CD4-positive, alpha-beta memory T cell (primary cell): ENCODE measurements at regions of chr7 and their contacts with region 1.

Region 1: DNA sequence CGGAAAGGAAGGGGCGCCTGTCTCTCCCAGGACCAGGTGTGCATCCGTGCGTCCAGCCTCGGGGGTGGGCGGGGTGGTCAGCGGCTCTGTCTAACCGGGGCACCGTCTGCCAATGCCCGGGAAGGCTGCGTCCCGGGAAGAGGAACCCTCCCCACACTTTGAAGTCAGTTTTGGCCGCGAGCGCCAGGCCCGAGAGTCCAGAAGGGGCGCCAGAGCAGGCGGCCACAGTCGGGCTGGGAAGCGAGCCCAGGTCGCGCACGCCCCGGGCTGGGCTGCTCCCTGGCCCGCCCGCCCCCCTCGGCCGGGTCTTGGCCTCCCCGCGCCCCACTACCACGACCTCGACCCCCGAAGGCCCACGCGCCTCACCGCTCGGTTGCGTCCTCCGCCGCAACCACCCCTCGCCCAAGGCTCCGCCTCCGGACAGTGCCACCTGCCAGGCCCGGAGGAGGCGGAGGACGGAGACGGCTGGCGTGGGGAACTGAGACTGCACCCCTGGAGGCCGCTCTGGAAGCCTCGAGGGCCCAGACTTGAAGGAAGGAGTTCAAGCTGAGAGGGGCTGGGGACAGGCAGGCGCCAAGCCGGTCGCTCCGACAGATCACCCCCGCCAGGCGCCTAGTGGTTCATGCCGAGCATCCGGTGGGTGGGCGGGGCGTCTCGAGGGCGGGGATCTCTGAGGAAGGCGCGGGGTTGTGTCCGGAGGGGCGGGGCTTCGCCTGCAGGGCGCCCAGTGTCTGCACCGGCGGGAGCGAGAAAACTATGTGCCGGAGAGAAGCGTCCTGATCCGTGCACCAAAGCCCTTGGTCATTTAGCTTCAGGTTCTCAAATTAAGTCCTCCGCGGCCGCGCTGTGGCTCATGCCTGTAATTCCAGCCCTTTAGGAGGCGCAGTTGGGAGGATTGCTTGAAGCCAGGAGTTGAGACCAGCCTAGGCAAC is at the start of gene BRAT1:
- DNase-seq: peak; percentile 91 to 95 (median 92)
- H3K4me3 ChIP-seq: peak within 1 kb of the TSS; percentile 52 to 82
- H3K4me3 Mint-ChIP-seq: peak within 1 kb of the TSS; percentile 84 to 91 (median 86)
- H3K27ac ChIP-seq: peak within 1 kb of the TSS; percentile 97
- H3K27ac Mint-ChIP-seq: peak within 1 kb of the TSS; percentile 81 to 92 (median 85)
- H3K4me1 ChIP-seq: peaks cover 49% of the 10 kb centered on the region
- H3K4me1 Mint-ChIP-seq: peaks cover 18 to 51% (median 31%) of the 10 kb centered on the region in 4 donors
- H3K27me3 ChIP-seq: no peaks in the 10 kb centered on the region
- H3K27me3 Mint-ChIP-seq: no peaks in the 10 kb centered on the region
- total RNA-seq, gene BRAT1: 37.0 to 41.4 TPM

Region 2: GRCh38 chr7:2403014-2403717 is 152.2 kb before region 1 on chr7 and contains the start of gene CHST12:
- CTCF ChIA-PET with region 1: no interaction called
- POLR2A ChIA-PET with region 1: no interaction called
- intact Hi-C with region 1: loop called (anchors 5 kb)
- DNase-seq: peak; percentile 93 to 94 (median 93)
- H3K4me3 ChIP-seq: peak within 1 kb of the TSS; percentile 80 to 91
- H3K4me3 Mint-ChIP-seq: peak within 1 kb of the TSS; percentile 87 to 96 (median 90)
- H3K27ac ChIP-seq: peak within 1 kb of the TSS; percentile 70
- H3K27ac Mint-ChIP-seq: peak within 1 kb of the TSS; percentile 90 to 96 (median 92)
- H3K4me1 ChIP-seq: peaks cover 53% of the 10 kb centered on the region
- H3K4me1 Mint-ChIP-seq: peaks cover 37 to 64% (median 47%) of the 10 kb centered on the region in 4 donors
- H3K27me3 ChIP-seq: no peaks in the 10 kb centered on the region
- H3K27me3 Mint-ChIP-seq: no peaks in the 10 kb centered on the region
- total RNA-seq, gene CHST12: 29.5 to 30.7 TPM

Region 3: GRCh38 chr7:2477447-2478398 is 77.7 kb before region 1 on chr7:
- CTCF ChIA-PET with region 1: interaction called, 3 read pairs
- POLR2A ChIA-PET with region 1: interaction called, 3 read pairs
- intact Hi-C with region 1: loop called (anchors 5 kb)
- DNase-seq: peak; percentile 54 to 69 (median 64)
- H3K4me3 ChIP-seq: no peak overlapping the region
- H3K4me3 Mint-ChIP-seq: peak overlapping the region in 2 of 8 donors; percentile 22 to 31
- H3K27ac ChIP-seq: no peak overlapping the region
- H3K27ac Mint-ChIP-seq: no peak overlapping the region
- H3K4me1 ChIP-seq: peaks cover 13% of the 10 kb centered on the region
- H3K4me1 Mint-ChIP-seq: peaks cover 0 to 4% (median 0%) of the 10 kb centered on the region in 4 donors
- H3K27me3 ChIP-seq: no peaks in the 10 kb centered on the region
- H3K27me3 Mint-ChIP-seq: no peaks in the 10 kb centered on the region

Region 4: DNA sequence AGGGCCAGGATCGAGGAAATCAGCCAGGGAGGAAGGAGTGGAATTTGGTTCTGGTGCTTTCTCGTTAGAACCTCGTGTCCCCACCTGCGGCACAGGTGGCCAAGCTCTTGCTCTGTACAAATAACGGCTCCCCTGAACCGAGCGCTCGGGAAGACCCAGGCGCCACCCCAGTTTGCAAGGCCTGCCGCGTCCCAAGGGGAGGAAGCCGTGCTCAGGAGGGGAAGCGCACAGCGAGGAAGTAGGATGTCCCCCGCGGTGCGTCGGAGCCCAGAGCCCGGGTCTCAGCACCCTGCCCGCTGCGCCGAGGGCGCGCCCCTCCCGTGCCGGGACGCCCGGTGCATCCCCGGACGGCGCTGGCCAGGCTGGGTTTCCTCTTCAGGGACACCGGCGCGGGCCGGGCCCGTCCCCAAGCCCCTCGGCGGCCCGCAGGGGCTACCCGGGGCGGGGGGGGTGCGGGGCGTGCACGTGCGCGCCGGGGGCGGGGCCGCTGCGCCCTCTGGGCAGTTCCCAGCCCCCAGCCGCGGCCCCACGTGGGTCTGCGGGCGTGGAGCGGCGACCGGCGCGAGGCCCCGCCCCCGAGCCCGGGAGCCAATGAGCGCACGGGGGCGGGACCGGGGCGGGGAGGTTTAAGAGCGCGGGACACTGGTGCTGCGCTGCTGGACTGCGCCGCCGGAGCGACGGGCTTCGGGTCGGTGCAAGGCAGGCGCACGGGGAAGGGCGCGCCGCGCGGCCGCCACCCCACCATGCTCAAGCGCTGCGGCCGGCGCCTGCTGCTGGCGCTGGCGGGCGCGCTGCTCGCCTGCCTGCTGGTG is 36.1 kb before region 1 on chr7 and contains the start of gene LFNG:
- CTCF ChIA-PET with region 1: interaction called, 3 read pairs
- POLR2A ChIA-PET with region 1: interaction called, 8 read pairs
- intact Hi-C with region 1: loop called (anchors 1 kb)
- DNase-seq: peak; percentile 77 to 86 (median 81)
- H3K4me3 ChIP-seq: peak within 1 kb of the TSS; percentile 93 to 98
- H3K4me3 Mint-ChIP-seq: peak within 1 kb of the TSS; percentile 97 to 99 (median 98)
- H3K27ac ChIP-seq: peak within 1 kb of the TSS; percentile 80
- H3K27ac Mint-ChIP-seq: peak within 1 kb of the TSS; percentile 89 to 99 (median 92)
- H3K4me1 ChIP-seq: peaks cover 37% of the 10 kb centered on the region
- H3K4me1 Mint-ChIP-seq: peaks cover 14 to 45% (median 25%) of the 10 kb centered on the region in 4 donors
- H3K27me3 ChIP-seq: no peaks in the 10 kb centered on the region
- H3K27me3 Mint-ChIP-seq: no peaks in the 10 kb centered on the region
- total RNA-seq, gene LFNG: 125 to 127 TPM

Region 5: DNA sequence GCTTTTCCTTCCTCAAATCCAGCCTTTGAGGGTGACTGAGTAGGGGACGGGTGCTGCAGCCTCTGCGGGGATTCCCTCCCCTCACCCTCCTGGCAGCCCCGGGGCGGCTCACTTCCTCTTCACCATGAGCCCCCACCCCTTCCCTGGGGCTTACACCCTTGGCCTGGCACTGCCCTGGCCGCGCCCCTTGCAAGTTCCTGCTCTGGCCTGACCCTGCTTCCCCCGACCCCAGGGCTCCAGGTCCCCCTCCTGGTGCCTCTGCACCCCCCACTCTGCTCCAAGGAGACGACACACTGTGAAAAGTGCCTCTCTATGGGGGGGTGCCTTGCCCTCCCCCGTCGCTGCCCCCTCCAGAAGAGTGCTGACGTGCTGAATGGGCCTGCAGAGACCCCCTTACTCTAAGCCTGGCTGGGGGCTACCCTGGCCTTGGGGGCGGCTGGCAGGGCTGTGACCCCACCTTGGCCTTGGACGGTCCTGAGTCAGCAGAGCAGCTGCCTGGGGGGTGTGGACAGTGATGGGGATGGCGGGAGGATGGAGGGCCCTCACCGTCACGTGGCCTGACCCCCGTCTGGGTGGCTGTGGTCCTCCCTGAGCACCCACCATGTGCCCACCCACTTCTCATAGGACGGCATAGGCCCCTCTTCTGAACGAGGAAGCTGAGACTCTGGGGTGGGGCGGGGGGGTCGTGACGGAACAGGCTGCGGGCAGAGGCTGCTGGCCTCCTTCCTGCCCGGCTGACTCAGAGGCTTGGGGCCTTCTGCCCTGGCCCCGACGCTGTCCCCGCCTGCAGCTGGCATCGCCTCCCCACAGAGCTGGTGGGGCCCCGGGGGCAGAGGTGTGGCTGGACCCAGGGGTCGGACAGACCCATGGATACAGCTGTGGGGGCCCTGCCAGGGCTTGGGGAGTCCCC is 26.0 kb before region 1 on chr7:
- CTCF ChIA-PET with region 1: no interaction called
- POLR2A ChIA-PET with region 1: interaction called, 9 read pairs
- intact Hi-C with region 1: loop called (anchors 1 kb)
- DNase-seq: peak; percentile 41 to 84 (median 54)
- H3K4me3 ChIP-seq: peak overlapping the region in 1 of 2 donors; percentile 50
- H3K4me3 Mint-ChIP-seq: peak overlapping the region; percentile 71 to 91 (median 80)
- H3K27ac ChIP-seq: peak overlapping the region; percentile 83
- H3K27ac Mint-ChIP-seq: peak overlapping the region; percentile 84 to 99 (median 93)
- H3K4me1 ChIP-seq: peaks cover 69% of the 10 kb centered on the region
- H3K4me1 Mint-ChIP-seq: peaks cover 19 to 65% (median 48%) of the 10 kb centered on the region in 4 donors
- H3K27me3 ChIP-seq: no peaks in the 10 kb centered on the region
- H3K27me3 Mint-ChIP-seq: no peaks in the 10 kb centered on the region

Region 6: GRCh38 chr7:2632733-2633537 is 77.5 kb after region 1 on chr7:
- CTCF ChIA-PET with region 1: no interaction called
- POLR2A ChIA-PET with region 1: no interaction called
- intact Hi-C with region 1: loop called (anchors 1 kb)
- DNase-seq: peak in 4 of 5 donors; percentile 15 to 19 (median 18)
- H3K4me3 ChIP-seq: peak overlapping the region; percentile 52 to 82
- H3K4me3 Mint-ChIP-seq: peak overlapping the region; percentile 81 to 89 (median 84)
- H3K27ac ChIP-seq: peak overlapping the region; percentile 63
- H3K27ac Mint-ChIP-seq: peak overlapping the region; percentile 44 to 82 (median 75)
- H3K4me1 ChIP-seq: peaks cover 27% of the 10 kb centered on the region
- H3K4me1 Mint-ChIP-seq: peaks cover 2 to 21% (median 15%) of the 10 kb centered on the region in 4 donors
- H3K27me3 ChIP-seq: no peaks in the 10 kb centered on the region
- H3K27me3 Mint-ChIP-seq: peaks cover 0 to under 1% of the 10 kb centered on the region in 2 donors

Region 7: DNA sequence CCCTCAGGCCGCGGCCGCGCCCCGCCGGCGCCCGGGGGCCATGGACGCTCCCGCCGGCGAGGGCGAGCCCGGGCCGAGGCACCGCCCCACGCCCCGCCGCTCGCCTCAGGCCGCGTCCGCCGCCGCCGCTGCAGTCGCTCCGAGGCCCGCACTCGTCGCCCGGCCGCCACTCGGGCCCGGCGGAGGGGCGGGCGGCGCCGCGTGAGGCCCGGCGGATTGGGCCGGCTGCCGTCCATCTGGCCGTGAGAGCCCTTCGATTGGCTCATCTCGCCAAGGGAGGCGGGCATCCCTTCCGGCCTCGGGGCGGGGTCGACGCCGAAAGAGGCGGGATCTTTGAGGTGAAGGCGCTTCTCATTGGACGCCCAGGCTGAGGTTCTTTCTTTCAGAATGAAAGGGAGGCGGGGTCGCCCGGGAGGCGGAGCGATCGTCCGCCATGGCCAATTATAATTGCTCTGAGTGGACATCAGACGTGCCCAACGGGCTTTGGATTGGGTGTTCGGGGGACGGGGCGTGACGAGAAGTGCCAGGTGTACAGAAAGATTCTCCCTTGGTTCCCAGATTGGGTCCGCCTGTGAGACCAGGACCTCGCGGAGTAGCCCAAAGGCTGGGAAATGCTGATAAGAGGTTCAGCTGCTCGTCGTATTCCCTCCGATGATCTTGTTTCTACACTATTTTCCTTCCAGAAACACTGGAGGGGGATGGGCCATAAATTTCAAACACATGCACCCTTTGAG is 288.9 kb after region 1 on chr7 and contains the start of gene GNA12:
- CTCF ChIA-PET with region 1: no interaction called
- POLR2A ChIA-PET with region 1: no interaction called
- intact Hi-C with region 1: loop called (anchors 1 kb)
- DNase-seq: peak; percentile 97 to 98 (median 98)
- H3K4me3 ChIP-seq: peak within 1 kb of the TSS; percentile 51 to 61
- H3K4me3 Mint-ChIP-seq: peak within 1 kb of the TSS; percentile 84 to 97 (median 88)
- H3K27ac ChIP-seq: peak within 1 kb of the TSS; percentile 32
- H3K27ac Mint-ChIP-seq: peak within 1 kb of the TSS; percentile 53 to 90 (median 79)
- H3K4me1 ChIP-seq: peaks cover 19% of the 10 kb centered on the region
- H3K4me1 Mint-ChIP-seq: peaks cover 25 to 53% (median 40%) of the 10 kb centered on the region in 4 donors
- H3K27me3 ChIP-seq: no peaks in the 10 kb centered on the region
- H3K27me3 Mint-ChIP-seq: no peaks in the 10 kb centered on the region
- total RNA-seq, gene GNA12: 14.9 to 16.6 TPM